ENCODE measurements at regions of chr13 and their contacts with region 1.

Region 1: DNA sequence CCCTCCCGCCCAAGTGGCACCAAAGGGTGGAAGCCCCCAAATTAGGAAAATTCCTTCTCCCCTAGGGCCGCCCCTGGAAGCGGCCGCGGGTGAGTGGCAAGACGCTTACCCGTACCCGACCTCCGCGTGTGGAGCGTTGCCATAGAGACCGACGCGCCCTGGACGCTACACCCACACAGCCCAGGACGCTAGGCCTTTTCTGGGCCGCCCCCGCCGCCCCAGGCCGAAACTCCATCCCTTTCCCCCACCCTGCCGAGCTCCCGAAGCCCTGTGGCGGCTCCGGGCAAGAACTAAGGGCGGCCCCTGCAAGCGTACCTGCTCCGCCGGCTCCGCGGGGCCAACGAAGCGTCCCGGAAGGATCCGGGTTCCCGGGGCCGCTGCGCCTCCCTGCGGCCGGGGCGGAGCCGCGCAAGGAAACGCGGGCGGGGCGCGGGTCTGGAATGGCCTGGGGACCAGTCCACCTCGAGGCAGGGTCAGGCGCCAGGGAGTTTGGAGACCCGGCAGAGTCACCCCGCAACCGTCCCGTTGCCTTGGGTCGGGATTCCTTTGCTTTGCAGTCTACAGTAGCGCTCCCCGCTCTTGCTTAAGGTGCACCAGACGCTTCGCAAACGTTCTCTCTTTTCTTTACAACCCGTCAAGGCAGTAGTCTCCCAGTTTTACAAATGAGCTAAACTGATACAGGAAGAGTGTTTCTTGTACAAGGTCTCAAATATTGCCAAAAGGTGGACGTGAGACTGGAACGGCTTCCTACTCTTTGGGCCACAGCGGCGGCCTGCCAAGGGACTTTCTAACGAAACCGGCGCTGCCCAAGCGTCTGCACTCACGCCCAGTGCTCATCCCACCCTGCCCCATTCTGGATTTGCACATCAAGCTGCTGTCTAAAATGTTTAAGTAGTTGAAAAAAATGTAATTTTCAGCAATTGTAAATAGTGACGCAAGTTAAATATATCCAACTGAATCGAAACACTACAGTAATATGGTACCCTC is at the start of gene NEK5:
- DNase-seq: peak; percentile 66
- H3K4me3 Mint-ChIP-seq: peak within 1 kb of the TSS; percentile 66
- H3K27ac Mint-ChIP-seq: no peak within 1 kb of the TSS
- H3K4me1 Mint-ChIP-seq: peaks cover 15% of the 10 kb centered on the region
- H3K27me3 Mint-ChIP-seq: peaks cover 12% of the 10 kb centered on the region
- total RNA-seq, gene NEK5: not detected

Region 2: GRCh38 chr13:51895906-51896888 is 232.8 kb before region 1 on chr13:
- CTCF ChIA-PET with region 1: interaction called, 51 read pairs
- POLR2A ChIA-PET with region 1: no interaction called
- DNase-seq: peak; percentile 61
- H3K4me3 Mint-ChIP-seq: no peak overlapping the region
- H3K27ac Mint-ChIP-seq: no peak overlapping the region
- H3K4me1 Mint-ChIP-seq: peaks cover 2% of the 10 kb centered on the region
- H3K27me3 Mint-ChIP-seq: peaks cover 20% of the 10 kb centered on the region

Region 3: GRCh38 chr13:52097197-52097596 is 31.8 kb before region 1 on chr13:
- CTCF ChIA-PET with region 1: no interaction called
- POLR2A ChIA-PET with region 1: no interaction called
- DNase-seq: no peak
- H3K4me3 Mint-ChIP-seq: no peak overlapping the region
- H3K27ac Mint-ChIP-seq: no peak overlapping the region
- H3K4me1 Mint-ChIP-seq: no peaks in the 10 kb centered on the region
- H3K27me3 Mint-ChIP-seq: no peaks in the 10 kb centered on the region

Region 4: DNA sequence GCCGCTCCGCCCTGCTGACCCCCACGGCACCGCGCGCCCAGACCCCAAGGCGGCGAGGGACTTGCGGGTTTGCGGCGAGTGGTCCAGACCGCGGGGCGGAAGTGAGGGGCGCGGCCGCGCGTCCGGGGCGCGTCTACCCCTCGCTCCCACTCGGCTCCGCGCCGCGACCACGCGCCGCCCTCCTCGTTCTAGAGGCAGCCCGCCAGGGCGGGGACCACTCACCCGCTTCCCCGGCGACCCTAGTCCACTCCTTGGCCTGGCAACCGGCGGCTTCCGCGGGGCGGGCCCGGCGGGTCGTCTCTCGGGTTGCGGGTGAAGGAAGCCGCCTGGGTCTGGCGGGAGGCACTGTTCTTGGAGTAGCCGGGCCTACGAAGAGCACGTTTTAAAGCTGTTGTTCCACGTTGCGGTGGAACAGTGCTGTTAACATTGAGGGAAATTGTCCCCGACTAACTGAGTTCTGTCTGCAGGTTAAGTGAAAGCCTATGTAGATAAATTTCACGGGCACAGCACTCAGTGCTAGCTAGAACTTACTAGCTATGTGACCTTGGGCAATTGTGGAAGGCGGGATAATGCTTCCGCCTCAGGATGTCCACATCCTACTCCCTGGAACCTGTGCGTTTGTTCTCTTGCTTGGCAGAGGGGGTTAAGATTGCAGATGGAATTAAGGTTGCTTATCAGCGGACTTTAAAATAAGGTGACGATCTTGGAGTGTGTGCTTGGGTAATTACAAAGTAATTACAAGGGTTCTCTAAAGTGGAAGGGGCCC is 30.5 kb after region 1 on chr13 and contains the start of gene NEK3:
- CTCF ChIA-PET with region 1: interaction called, 12 read pairs
- POLR2A ChIA-PET with region 1: no interaction called
- DNase-seq: peak; percentile 70
- H3K4me3 Mint-ChIP-seq: peak within 1 kb of the TSS; percentile 80
- H3K27ac Mint-ChIP-seq: peak within 1 kb of the TSS; percentile 76
- H3K4me1 Mint-ChIP-seq: peaks cover 53% of the 10 kb centered on the region
- H3K27me3 Mint-ChIP-seq: peaks cover 4% of the 10 kb centered on the region
- total RNA-seq, gene NEK3: 8.1 to 12.9 TPM

Region 5: GRCh38 chr13:52194184-52194868 is 65.3 kb after region 1 on chr13:
- CTCF ChIA-PET with region 1: interaction called, 10 read pairs
- POLR2A ChIA-PET with region 1: no interaction called
- DNase-seq: peak; percentile 90
- H3K4me3 Mint-ChIP-seq: peak overlapping the region; percentile 95
- H3K27ac Mint-ChIP-seq: peak overlapping the region; percentile 97
- H3K4me1 Mint-ChIP-seq: peaks cover 33% of the 10 kb centered on the region
- H3K27me3 Mint-ChIP-seq: no peaks in the 10 kb centered on the region